ENCODE measurements at regions of chr7 and their contacts with region 1.

Region 1: DNA sequence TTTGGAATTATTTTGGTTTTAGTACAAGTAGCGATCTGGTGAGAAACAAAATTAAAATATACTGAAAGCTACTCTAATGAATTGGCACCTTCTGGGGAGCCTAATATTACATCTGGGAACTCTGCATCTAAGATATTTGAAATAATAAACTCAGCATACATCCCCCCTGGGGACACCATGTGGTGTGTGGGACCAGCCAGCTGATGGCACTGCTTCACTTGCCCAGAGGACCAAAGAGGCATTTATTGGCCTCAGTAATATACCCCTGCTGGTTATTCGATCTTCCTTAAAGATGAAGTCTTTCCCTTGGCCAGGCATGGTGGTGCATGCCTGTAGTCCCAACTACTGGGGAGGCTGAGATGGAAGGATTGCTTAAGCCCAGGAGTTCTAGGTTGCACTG is 195.1 kb upstream of the AUTS2 start:
- DNase-seq: no peak
- ATAC-seq: no peak
- H3K4me3 Mint-ChIP-seq: no peak overlapping the region
- H3K27ac Mint-ChIP-seq: no peak overlapping the region
- H3K4me1 Mint-ChIP-seq: no peaks in the 10 kb centered on the region
- H3K27me3 Mint-ChIP-seq: no peaks in the 10 kb centered on the region
- CTCF ChIP-seq: no peak

Region 2: DNA sequence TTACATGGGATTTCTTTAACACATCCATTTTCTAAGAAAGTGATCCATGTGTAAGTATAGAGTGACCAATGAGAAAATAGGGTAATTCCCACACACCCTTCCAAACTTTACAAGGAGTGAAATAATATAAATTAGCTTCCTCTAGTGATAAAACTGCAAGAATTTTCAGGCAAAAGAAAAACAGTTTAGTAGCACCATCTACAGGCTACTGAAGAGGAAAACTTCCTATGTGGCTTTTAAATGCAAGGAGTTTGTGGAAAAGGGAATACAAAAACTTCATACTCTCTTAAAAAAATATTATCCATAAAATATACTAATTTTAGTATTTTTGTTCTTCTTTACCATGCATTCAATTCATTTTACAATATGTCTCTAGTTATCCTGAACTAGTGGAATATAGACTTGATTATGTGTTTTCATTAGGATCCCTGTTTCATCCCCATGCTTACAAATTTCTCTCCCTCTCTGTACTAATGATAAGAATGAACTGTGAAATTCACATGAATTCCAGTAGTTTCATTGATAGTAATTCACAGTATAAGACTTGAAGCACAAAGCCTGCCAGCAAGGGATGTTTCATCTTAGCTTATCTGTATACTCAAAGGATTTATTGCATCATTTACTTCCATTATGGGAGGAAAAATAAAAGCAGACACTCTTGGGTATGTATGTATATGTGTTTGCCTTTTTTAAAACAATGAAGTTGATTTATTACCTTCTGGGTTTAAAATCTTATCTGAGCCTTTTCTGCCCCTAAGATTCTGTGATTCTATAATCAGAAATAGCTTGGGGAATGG is 638.0 kb after region 1 on chr7:
- CTCF ChIA-PET with region 1: interaction called, 4 read pairs
- POLR2A ChIA-PET with region 1: no interaction called
- intact Hi-C with region 1: loop called (anchors 2 kb)
- DNase-seq: no peak
- ATAC-seq: no peak
- H3K4me3 Mint-ChIP-seq: no peak overlapping the region
- H3K27ac Mint-ChIP-seq: no peak overlapping the region
- H3K4me1 Mint-ChIP-seq: peaks cover 6% of the 10 kb centered on the region
- H3K27me3 Mint-ChIP-seq: no peaks in the 10 kb centered on the region
- CTCF ChIP-seq: no peak